Keratinocyte (primary cell): ENCODE measurements at regions of chr10 and their contacts with region 1.

Region 1: DNA sequence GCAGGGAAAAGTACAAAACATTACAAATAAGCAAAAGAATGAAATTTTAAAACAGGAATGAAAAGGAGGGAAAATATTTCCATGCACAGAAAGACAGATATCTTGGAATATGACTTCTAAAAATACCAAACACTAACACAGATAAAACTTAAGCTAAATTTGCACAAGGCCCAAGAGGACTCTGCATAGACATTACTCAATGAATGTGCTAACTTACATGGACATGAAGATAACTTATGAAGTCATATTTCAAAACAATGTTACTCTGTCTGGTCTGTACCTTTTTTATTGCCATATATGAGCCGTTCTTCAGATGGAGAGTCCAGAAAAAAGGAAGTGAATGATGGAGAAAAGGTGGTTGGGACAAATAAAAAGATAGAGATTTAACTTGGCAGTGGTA is 15.0 kb upstream of the MSS51 start:
- DNase-seq: no peak
- H3K4me3 ChIP-seq: no peak overlapping the region
- H3K27ac ChIP-seq: no peak overlapping the region
- H3K4me1 ChIP-seq: no peaks in the 10 kb centered on the region
- H3K27me3 ChIP-seq: no peaks in the 10 kb centered on the region
- CTCF ChIP-seq: no peak

Region 2: GRCh38 chr10:73357166-73357565 is 91.2 kb before region 1 on chr10:
- dilution Hi-C with region 1: no loop called
- DNase-seq: no peak
- H3K4me3 ChIP-seq: no peak overlapping the region
- H3K27ac ChIP-seq: no peak overlapping the region
- H3K4me1 ChIP-seq: peaks cover 11% of the 10 kb centered on the region
- H3K27me3 ChIP-seq: no peaks in the 10 kb centered on the region
- CTCF ChIP-seq: no peak

Region 3: DNA sequence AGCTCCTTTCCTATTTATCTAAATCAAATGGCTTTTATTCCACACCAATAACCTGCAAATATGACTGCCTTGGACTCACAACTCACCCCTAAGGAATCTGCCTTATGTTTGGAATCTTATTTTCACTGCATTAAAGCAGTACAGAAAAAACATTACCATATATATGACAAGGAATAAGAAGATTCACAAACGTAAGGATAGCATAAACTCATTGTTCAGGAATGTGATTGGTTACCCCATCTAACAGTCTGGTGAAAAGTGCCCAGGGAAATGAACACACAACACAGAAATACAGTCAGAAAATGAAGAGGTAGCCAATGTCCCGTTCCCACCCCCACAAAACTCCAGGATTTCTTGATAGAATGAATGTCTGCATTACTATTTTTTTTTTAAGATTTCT is 45.4 kb after region 1 on chr10:
- dilution Hi-C with region 1: loop called (anchors 5 kb)
- DNase-seq: no peak
- H3K4me3 ChIP-seq: peak overlapping the region; percentile 11 to 89 (median 85)
- H3K27ac ChIP-seq: peak overlapping the region; percentile 33
- H3K4me1 ChIP-seq: peaks cover 20% of the 10 kb centered on the region
- H3K27me3 ChIP-seq: no peaks in the 10 kb centered on the region
- CTCF ChIP-seq: no peak